Gastrocnemius medialis (tissue), 4 donors: ENCODE measurements at regions of chr1 and their contacts with region 1.

Region 1: DNA sequence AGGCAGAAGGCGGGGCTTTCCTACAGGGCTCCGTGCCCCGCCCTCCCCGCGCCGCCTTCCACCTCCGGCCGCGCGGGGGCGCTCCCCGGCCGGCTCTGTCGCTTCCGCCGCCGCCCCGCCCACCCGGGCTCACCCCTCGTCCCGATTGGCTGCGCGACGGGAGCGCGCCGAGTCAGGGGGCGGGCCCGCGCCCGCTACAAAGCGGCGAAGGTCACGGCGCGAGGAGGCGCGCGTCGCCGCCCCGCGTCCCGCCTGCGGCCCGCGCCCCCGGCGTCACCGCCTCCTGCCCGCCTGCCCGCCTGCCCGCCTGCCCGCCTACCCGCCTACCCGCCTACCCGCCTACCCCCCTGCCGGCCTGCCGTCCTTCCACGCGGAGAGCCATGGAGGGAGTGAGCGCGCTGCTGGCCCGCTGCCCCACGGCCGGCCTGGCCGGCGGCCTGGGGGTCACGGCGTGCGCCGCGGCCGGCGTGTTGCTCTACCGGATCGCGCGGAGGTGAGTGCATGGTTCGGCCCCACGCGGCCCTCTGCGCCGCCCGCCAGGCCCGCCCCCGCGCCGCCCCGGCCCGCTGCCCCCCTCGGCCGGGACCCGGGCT is at the start of gene TMEM201:
- DNase-seq: peak; percentile 83 to 93
- ATAC-seq: peak; percentile 62 to 73
- H3K4me3 ChIP-seq: peak within 1 kb of the TSS; percentile 53 to 86 (median 59)
- H3K27ac ChIP-seq: peak within 1 kb of the TSS; percentile 77 to 84 (median 82)
- H3K4me1 ChIP-seq: peaks cover 46 to 47% of the 10 kb centered on the region in 2 donors
- H3K27me3 ChIP-seq: no peaks in the 10 kb centered on the region
- CTCF ChIP-seq: peak; percentile 69 to 96 (median 88)
- POLR2A ChIP-seq: peak; percentile 87 to 92
- total RNA-seq, gene TMEM201: 21.5 to 67.6 (median 31.7) TPM

Region 2: GRCh38 chr1:9561429-9561828 is 27.2 kb before region 1 on chr1:
- in situ Hi-C with region 1: no loop called
- intact Hi-C with region 1: loop called (anchors 2 kb)
- DNase-seq: peak; percentile 53 to 57
- ATAC-seq: peak; percentile 85 to 93
- H3K4me3 ChIP-seq: no peak overlapping the region
- H3K27ac ChIP-seq: peak overlapping the region; percentile 94 to 100 (median 96)
- H3K4me1 ChIP-seq: peaks cover 58 to 61% of the 10 kb centered on the region in 2 donors
- H3K27me3 ChIP-seq: no peaks in the 10 kb centered on the region
- CTCF ChIP-seq: no peak
- POLR2A ChIP-seq: no peak